Sigmoid colon (tissue), 7 donors: ENCODE measurements at regions of chr9 and their contacts with region 1.

Region 1: GRCh38 chr9:76717613-76718012 is 46.6 kb upstream of the PCA3 start:
- DNase-seq: no peak
- H3K4me3 ChIP-seq: no peak overlapping the region
- H3K27ac ChIP-seq: peak overlapping the region; percentile 23 to 60 (median 43)
- H3K4me1 ChIP-seq: peaks cover 0 to 33% (median 28%) of the 10 kb centered on the region in 4 donors
- H3K27me3 ChIP-seq: no peaks in the 10 kb centered on the region
- CTCF ChIP-seq: no peak
- EP300 ChIP-seq: peak in 1 of 4 donors; percentile 12
- POLR2A ChIP-seq: no peak

Region 2: DNA sequence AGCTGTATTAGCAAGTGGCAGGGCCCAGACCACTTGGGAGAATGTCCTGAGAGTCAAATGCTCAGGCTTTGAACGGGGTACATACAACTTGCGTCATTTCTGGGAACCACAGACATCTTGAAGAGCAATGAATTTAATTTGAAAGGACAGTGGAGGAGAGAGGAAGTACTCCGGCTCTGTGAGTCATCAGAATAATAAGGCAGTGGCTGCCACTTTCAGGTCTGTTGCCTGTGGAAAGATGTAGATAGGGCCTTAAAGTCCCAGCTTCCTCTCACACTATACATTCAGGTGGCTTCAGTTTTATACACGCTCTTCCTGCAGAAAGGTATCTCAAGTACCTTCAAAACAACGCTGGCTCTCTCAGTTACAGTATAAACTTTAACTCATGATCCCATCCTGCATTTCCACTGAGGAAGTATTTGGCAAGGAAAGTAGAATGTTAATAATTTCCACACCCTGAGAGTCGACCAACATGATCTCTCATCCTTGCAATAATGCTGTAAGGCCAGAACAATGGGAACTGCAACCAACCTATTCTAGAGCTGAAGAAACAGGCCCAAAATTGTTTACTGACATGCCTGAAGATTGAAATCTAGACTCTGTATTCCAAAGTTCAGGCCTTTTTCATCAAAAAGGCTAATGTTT is 195.1 kb after region 1 on chr9:
- intact Hi-C with region 1: loop called (anchors 10 kb)
- DNase-seq: no peak
- H3K4me3 ChIP-seq: no peak overlapping the region
- H3K27ac ChIP-seq: peak overlapping the region in 1 of 4 donors; percentile 37
- H3K4me1 ChIP-seq: no peaks in the 10 kb centered on the region
- H3K27me3 ChIP-seq: no peaks in the 10 kb centered on the region
- CTCF ChIP-seq: no peak
- EP300 ChIP-seq: peak in 1 of 4 donors; percentile 45
- POLR2A ChIP-seq: no peak